Panc1 (cell line): ENCODE measurements at regions of chr10 and their contacts with region 1.

Region 1: GRCh38 chr10:70169649-70170364 is 507 bp downstream of the SAR1A start:
- DNase-seq: no peak
- ATAC-seq: peak; percentile 46
- H3K4me3 ChIP-seq: peak overlapping the region; percentile 97
- H3K27ac ChIP-seq: peak overlapping the region; percentile 91
- H3K4me1 ChIP-seq: peaks cover 26% of the 10 kb centered on the region
- H3K27me3 ChIP-seq: no peaks in the 10 kb centered on the region
- CTCF ChIP-seq: no peak

Region 2: GRCh38 chr10:69769395-69769992 is 400.3 kb before region 1 on chr10:
- CTCF ChIA-PET with region 1: no interaction called
- POLR2A ChIA-PET with region 1: interaction called, 12 read pairs
- in situ Hi-C with region 1: no loop called
- intact Hi-C with region 1: no loop called
- DNase-seq: peak; percentile 25
- ATAC-seq: peak; percentile 96
- H3K4me3 ChIP-seq: peak overlapping the region in 1 of 2 experiments; percentile 15; a peak in 1 of 4 replicates
- H3K27ac ChIP-seq: peak overlapping the region; percentile 76
- H3K4me1 ChIP-seq: peaks cover 22% of the 10 kb centered on the region
- H3K27me3 ChIP-seq: no peaks in the 10 kb centered on the region
- CTCF ChIP-seq: no peak

Region 3: DNA sequence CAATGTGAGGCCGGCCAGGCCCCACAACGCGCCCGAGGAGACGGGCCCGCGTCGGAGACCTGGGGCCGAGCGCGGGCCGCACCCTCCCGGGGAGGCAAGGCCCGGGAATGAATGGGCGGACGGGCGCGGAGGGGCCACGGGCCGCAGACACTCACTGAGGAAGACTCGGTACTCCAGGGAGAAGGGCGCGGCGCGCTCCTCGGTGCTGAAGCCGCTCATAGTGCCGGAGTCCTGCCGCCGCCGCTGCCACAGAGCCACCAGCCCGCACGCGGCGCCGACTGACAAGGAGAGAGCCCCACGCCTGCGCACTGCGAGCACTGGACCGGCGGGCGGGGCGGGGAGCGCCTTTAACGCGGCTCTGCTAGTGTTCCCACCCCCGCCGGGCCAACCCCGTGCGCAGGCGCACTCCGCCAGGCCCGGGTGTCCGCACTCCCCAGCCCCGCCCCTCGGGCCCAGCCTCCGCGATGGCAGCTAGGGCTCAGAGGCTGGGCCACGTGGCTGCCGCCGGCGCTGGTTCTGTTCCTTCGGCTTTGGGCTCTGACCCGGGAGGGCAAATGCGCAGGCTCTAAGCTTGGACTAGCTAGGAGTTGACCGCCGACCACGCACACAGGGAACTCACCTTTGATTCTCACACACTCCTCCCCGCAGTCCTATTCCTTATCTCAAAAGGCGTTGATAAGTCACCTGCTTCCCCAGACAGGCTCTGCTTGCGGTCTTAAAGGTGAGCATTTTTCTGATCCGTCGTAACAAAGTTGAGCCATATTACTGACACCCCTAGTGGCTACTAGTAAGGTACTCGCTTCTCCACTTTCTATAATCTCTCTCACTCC is 63.5 kb after region 1 on chr10 and contains the start of gene PPA1:
- CTCF ChIA-PET with region 1: no interaction called
- POLR2A ChIA-PET with region 1: interaction called, 10 read pairs
- in situ Hi-C with region 1: no loop called
- intact Hi-C with region 1: no loop called
- DNase-seq: peak; percentile 84
- ATAC-seq: peak; percentile 98
- H3K4me3 ChIP-seq: peak within 1 kb of the TSS; percentile 90 to 98
- H3K27ac ChIP-seq: peak within 1 kb of the TSS; percentile 96
- H3K4me1 ChIP-seq: peaks cover 12% of the 10 kb centered on the region
- H3K27me3 ChIP-seq: no peaks in the 10 kb centered on the region
- CTCF ChIP-seq: no peak
- total RNA-seq, gene PPA1: 174 TPM

Region 4: GRCh38 chr10:70391654-70392053 is 221.8 kb after region 1 on chr10:
- CTCF ChIA-PET with region 1: interaction called, 10 read pairs
- POLR2A ChIA-PET with region 1: no interaction called
- in situ Hi-C with region 1: no loop called
- intact Hi-C with region 1: no loop called
- DNase-seq: no peak
- ATAC-seq: no peak
- H3K4me3 ChIP-seq: no peak overlapping the region
- H3K27ac ChIP-seq: no peak overlapping the region
- H3K4me1 ChIP-seq: peaks cover 6% of the 10 kb centered on the region; the same call in 1 of the 2 replicates
- H3K27me3 ChIP-seq: no peaks in the 10 kb centered on the region; the same call in 1 of the 2 replicates
- CTCF ChIP-seq: no peak